WTC11 (cell line): ENCODE measurements at regions of chr15 and their contacts with region 1.

Region 1: DNA sequence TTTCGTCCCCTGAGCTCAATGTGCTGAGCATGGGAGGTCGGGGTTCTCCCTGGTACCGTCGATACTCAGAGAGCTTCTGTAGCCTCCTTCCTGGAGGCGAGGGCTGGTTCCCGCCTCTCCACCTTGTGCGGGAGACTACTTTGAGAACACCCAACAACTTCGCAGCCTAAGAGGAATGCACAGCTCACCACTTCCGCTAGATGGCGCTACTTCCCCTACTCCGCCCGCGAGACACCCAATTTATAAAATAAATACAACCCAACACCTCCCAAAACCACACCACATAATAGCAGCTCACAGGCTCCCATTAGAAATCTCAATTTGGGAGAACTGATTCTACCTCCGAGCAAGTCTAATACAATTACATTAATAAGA is 1.2 kb downstream of the RGMA start:
- DNase-seq: peak; percentile 85
- ATAC-seq: peak; percentile 67
- H3K4me3 Mint-ChIP-seq: peak overlapping the region; percentile 82
- H3K27ac Mint-ChIP-seq: no peak overlapping the region
- H3K4me1 Mint-ChIP-seq: peaks cover 35% of the 10 kb centered on the region
- H3K27me3 Mint-ChIP-seq: peaks cover 17% of the 10 kb centered on the region
- CTCF ChIP-seq: peak; percentile 88

Region 2: GRCh38 chr15:93035953-93036800 is 51.6 kb before region 1 on chr15:
- CTCF ChIA-PET with region 1: interaction called, 13 read pairs
- POLR2A ChIA-PET with region 1: interaction called, 3 read pairs
- DNase-seq: peak; percentile 46
- ATAC-seq: peak; percentile 46
- H3K4me3 Mint-ChIP-seq: no peak overlapping the region
- H3K27ac Mint-ChIP-seq: no peak overlapping the region
- H3K4me1 Mint-ChIP-seq: peaks cover 10% of the 10 kb centered on the region
- H3K27me3 Mint-ChIP-seq: no peaks in the 10 kb centered on the region
- CTCF ChIP-seq: peak; percentile 47

Region 3: DNA sequence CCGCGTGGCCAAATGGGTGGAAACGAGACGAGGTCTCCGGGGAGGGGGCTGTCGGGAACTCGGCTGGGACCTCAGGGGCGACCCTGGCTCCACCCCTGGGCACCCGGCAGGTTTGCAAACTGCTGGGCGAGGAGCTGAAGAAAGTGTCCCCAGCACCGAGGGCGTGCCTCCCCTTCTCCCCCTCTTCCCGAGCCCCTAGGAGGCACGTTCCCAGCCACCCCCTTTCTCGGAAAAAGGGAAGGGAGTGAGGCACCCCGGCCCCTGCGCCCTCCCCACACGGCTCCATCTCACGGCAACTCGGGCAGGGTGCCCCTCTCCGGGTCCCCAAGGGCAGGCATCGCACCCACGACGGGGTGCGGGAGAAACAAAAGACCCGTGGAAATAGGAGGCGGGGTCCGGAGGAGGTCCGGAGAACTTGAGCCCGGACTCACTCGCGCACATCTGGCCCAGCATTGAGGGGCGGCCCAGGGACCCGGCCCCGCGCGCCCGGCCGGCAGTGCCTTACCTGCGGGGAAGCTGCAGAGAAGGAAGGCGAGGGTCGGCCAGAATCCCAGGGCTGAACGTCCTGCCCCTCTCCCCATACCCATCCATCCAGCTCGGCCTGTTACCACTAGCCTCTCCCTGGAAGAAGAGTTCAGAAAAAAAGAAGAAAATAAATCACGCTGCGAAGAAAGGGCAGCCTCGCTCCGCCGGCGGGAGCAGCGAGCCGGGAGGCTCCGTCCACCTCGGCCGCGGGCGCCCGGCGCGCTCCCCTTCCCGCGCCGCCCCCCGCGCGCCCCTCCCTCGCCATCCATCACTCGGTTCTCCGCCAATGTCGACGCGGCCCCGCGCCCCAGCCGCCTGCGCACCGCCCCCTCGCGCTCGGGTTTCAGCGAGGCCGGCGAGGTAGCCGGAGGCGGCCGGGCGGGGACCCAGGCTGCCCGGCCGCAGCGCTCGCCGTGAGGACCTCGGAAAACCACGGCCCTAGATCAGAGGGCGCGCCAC is 15.1 kb before region 1 on chr15:
- CTCF ChIA-PET with region 1: interaction called, 53 read pairs
- POLR2A ChIA-PET with region 1: interaction called, 5 read pairs
- DNase-seq: peak; percentile 89
- ATAC-seq: peak; percentile 78
- H3K4me3 Mint-ChIP-seq: peak overlapping the region; percentile 97
- H3K27ac Mint-ChIP-seq: peak overlapping the region; percentile 92
- H3K4me1 Mint-ChIP-seq: peaks cover 67% of the 10 kb centered on the region
- H3K27me3 Mint-ChIP-seq: peaks cover 16% of the 10 kb centered on the region
- CTCF ChIP-seq: no peak

Region 4: DNA sequence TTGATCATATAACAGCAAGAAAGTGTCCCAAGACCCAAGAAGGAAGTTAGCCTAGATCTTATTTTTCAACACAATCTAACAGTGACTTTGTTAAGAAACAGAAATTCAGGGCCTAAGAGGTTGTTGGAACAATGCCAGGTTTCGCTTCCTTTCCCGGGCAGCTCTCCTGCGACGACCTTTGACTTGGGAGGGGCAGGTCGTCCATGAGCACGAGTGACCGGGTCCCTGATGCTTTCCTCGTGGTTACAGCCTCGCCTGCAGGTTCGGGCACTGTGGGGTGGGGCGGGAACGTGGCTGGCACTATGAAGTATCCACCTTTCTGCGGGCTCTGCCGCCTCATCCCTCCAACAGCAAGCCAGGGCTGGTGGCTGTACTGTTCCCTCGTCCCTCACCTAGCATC is 91.3 kb after region 1 on chr15:
- CTCF ChIA-PET with region 1: interaction called, 24 read pairs
- POLR2A ChIA-PET with region 1: no interaction called
- DNase-seq: no peak
- ATAC-seq: no peak
- H3K4me3 Mint-ChIP-seq: no peak overlapping the region
- H3K27ac Mint-ChIP-seq: no peak overlapping the region
- H3K4me1 Mint-ChIP-seq: peaks cover 51% of the 10 kb centered on the region
- H3K27me3 Mint-ChIP-seq: peaks cover 11% of the 10 kb centered on the region
- CTCF ChIP-seq: no peak

Region 5: GRCh38 chr15:93283854-93284253 is 196.0 kb after region 1 on chr15:
- CTCF ChIA-PET with region 1: interaction called, 16 read pairs
- POLR2A ChIA-PET with region 1: interaction called, 4 read pairs
- DNase-seq: no peak
- ATAC-seq: no peak
- H3K4me3 Mint-ChIP-seq: no peak overlapping the region
- H3K27ac Mint-ChIP-seq: no peak overlapping the region
- H3K4me1 Mint-ChIP-seq: peaks cover 38% of the 10 kb centered on the region
- H3K27me3 Mint-ChIP-seq: peaks cover 6% of the 10 kb centered on the region
- CTCF ChIP-seq: no peak

Region 6: GRCh38 chr15:93331545-93332167 is 243.8 kb after region 1 on chr15:
- CTCF ChIA-PET with region 1: interaction called, 34 read pairs
- POLR2A ChIA-PET with region 1: interaction called, 4 read pairs
- DNase-seq: peak; percentile 69
- ATAC-seq: peak; percentile 30
- H3K4me3 Mint-ChIP-seq: peak overlapping the region; percentile 63
- H3K27ac Mint-ChIP-seq: no peak overlapping the region
- H3K4me1 Mint-ChIP-seq: peaks cover 71% of the 10 kb centered on the region
- H3K27me3 Mint-ChIP-seq: peaks cover 92% of the 10 kb centered on the region
- CTCF ChIP-seq: no peak